Naive thymus-derived CD4-positive, alpha-beta T cell (primary cell): ENCODE measurements at regions of chr15 and their contacts with region 1.

Region 1: DNA sequence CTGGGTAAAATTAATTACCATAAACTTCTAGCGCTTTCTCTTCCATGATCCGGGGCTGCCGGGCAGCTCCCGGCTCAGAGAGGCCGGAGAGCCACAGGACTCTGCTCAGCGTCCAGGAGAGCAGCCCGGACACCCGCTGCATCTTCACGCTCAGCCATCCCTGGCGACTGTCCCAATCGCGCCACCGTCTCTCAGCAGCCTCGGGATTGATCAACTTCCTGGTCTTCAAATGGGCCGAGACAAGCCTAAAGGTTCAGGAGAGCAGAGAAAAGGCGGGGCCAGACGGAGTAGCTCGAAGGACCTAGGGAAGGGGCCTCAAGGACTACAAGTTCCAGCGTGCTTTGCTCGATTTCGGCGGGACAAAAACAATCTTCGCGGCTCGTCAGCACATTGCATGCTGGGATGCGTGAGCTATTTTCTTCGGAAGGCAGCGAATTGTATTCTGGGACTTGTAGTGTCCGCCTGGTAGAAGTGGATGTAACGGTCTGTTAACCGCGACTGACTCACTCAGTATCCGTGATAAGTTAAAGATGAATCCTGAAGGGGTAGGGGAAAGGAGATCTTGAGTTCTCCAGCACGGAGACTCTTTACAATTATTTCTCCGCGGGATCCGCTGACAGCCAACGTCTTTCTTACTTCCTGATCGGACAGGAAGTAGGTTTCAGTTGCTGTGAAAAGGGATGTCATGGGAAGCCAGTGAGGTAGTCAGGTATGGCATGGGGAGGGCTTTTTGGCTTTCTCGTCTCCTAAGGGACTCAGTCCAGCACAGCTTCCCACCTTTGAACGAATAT is at the start of gene CIAO2A:
- DNase-seq: peak; percentile 66 to 93 (median 87)
- ATAC-seq: peak; percentile 80
- H3K4me3 ChIP-seq: peak within 1 kb of the TSS; percentile 87
- H3K4me3 Mint-ChIP-seq: peak within 1 kb of the TSS; percentile 92 to 100 (median 98)
- H3K27ac ChIP-seq: peak within 1 kb of the TSS; percentile 88
- H3K27ac Mint-ChIP-seq: peak within 1 kb of the TSS; percentile 98 to 100 (median 99)
- H3K4me1 ChIP-seq: peaks cover 41 to 48% of the 10 kb centered on the region in 2 donors
- H3K4me1 Mint-ChIP-seq: peaks cover 50 to 86% (median 81%) of the 10 kb centered on the region in 7 donors
- H3K27me3 ChIP-seq: no peaks in the 10 kb centered on the region
- H3K27me3 Mint-ChIP-seq: no peaks in the 10 kb centered on the region
- total RNA-seq, gene CIAO2A: 19.2 to 66.8 (median 28.0) TPM

Region 2: DNA sequence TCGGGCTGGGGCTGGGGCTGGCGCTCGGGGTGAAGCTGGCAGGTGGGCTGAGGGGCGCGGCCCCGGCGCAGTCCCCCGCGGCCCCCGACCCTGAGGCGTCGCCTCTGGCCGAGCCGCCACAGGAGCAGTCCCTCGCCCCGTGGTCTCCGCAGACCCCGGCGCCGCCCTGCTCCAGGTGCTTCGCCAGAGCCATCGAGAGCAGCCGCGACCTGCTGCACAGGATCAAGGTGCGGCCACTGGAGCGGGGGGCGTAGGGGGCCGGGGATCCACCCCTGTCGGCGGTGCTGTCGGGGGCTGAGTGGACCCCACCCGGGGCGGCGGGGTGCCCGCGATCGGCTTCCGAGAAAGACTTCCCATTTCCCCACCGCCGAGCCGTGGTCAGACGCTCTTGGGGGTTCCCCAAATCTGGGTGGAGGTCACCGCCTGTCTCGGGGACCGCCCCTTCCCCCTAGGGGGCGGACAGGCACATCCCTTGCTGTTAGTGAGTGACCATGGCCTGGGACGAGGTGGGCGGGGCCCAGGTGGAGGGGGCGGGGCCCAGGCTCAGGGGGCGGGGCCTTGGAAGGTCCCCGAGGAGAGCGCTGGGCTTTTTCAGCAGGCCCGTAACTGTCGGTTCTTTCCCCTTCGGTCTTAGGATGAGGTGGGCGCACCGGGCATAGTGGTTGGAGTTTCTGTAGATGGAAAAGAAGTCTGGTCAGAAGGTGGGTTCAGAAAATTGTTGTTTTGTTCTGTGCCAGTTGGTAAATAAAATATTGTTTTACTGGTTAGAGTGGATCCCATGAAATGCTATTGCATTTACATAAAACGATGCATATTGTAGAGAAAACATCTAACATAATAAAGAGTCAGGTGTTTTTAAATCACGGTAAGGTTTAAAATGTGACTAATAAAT is 971.6 kb before region 1 on chr15:
- CTCF ChIA-PET with region 1: no interaction called
- POLR2A ChIA-PET with region 1: no interaction called
- intact Hi-C with region 1: loop called (anchors 5 kb)
- DNase-seq: peak; percentile 38 to 91 (median 57)
- ATAC-seq: peak; percentile 95
- H3K4me3 ChIP-seq: peak overlapping the region; percentile 75
- H3K4me3 Mint-ChIP-seq: peak overlapping the region; percentile 80 to 95 (median 92)
- H3K27ac ChIP-seq: peak overlapping the region; percentile 80
- H3K27ac Mint-ChIP-seq: peak overlapping the region; percentile 54 to 95 (median 79)
- H3K4me1 ChIP-seq: peaks cover 4 to 8% of the 10 kb centered on the region in 2 donors
- H3K4me1 Mint-ChIP-seq: peaks cover 9 to 29% (median 18%) of the 10 kb centered on the region in 7 donors
- H3K27me3 ChIP-seq: no peaks in the 10 kb centered on the region
- H3K27me3 Mint-ChIP-seq: no peaks in the 10 kb centered on the region

Region 3: GRCh38 chr15:63504247-63504978 is 589.4 kb before region 1 on chr15 and contains the start of gene USP3:
- CTCF ChIA-PET with region 1: no interaction called
- POLR2A ChIA-PET with region 1: interaction called, 5 read pairs
- intact Hi-C with region 1: loop called (anchors 1 kb)
- DNase-seq: peak; percentile 88 to 95 (median 94)
- ATAC-seq: peak; percentile 86
- H3K4me3 ChIP-seq: peak within 1 kb of the TSS; percentile 95
- H3K4me3 Mint-ChIP-seq: peak within 1 kb of the TSS; percentile 93 to 99 (median 98)
- H3K27ac ChIP-seq: peak within 1 kb of the TSS; percentile 97
- H3K27ac Mint-ChIP-seq: peak within 1 kb of the TSS; percentile 94 to 99 (median 97)
- H3K4me1 ChIP-seq: peaks cover 65 to 70% of the 10 kb centered on the region in 2 donors
- H3K4me1 Mint-ChIP-seq: peaks cover 30 to 75% (median 72%) of the 10 kb centered on the region in 7 donors
- H3K27me3 ChIP-seq: no peaks in the 10 kb centered on the region
- H3K27me3 Mint-ChIP-seq: no peaks in the 10 kb centered on the region
- total RNA-seq, gene USP3: 64.2 to 288 (median 155) TPM

Region 4: DNA sequence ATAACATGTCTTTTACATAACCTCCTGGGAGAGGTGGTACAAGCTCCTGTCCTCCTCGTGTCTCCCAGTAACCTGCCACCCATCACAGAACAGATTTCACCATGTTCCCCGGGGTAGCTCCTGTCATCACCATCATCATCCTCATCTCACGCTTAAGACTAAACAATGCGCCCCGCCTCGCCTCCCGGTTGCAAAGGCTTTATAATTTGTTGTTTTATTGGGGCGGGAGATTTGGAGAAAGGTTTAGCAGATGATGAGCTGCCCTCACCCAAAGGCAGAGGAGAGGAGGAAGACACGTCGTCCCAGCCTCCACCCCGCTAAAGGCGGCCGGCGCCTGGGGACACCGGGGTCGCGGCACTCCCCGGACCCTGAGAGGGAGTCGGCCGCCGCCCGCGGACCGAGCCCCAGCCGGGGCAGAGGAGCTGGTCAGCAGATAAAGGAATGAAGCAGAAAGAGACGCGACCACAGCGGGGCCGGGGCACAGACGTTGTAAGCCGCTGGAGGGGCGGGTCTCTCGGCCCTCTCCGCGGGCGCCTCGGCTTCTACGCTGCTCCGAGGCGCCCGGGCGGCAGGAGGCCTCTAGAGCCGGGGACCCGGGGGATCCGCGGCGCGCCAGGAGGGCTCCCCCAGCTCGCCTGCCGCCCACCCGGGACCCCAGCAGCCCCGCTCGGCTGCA is 260.7 kb before region 1 on chr15:
- CTCF ChIA-PET with region 1: no interaction called
- POLR2A ChIA-PET with region 1: interaction called, 3 read pairs
- intact Hi-C with region 1: loop called (anchors 1 to 2 kb)
- DNase-seq: peak; percentile 11 to 55 (median 38)
- ATAC-seq: peak; percentile 48
- H3K4me3 ChIP-seq: peak overlapping the region; percentile 68
- H3K4me3 Mint-ChIP-seq: peak overlapping the region; percentile 86 to 98 (median 94)
- H3K27ac ChIP-seq: peak overlapping the region; percentile 99
- H3K27ac Mint-ChIP-seq: peak overlapping the region; percentile 94 to 99 (median 97)
- H3K4me1 ChIP-seq: peaks cover 30 to 31% of the 10 kb centered on the region in 2 donors
- H3K4me1 Mint-ChIP-seq: peaks cover 46 to 66% (median 56%) of the 10 kb centered on the region in 7 donors
- H3K27me3 ChIP-seq: no peaks in the 10 kb centered on the region
- H3K27me3 Mint-ChIP-seq: peaks cover 0 to 9% (median 0%) of the 10 kb centered on the region in 5 donors

Region 5: DNA sequence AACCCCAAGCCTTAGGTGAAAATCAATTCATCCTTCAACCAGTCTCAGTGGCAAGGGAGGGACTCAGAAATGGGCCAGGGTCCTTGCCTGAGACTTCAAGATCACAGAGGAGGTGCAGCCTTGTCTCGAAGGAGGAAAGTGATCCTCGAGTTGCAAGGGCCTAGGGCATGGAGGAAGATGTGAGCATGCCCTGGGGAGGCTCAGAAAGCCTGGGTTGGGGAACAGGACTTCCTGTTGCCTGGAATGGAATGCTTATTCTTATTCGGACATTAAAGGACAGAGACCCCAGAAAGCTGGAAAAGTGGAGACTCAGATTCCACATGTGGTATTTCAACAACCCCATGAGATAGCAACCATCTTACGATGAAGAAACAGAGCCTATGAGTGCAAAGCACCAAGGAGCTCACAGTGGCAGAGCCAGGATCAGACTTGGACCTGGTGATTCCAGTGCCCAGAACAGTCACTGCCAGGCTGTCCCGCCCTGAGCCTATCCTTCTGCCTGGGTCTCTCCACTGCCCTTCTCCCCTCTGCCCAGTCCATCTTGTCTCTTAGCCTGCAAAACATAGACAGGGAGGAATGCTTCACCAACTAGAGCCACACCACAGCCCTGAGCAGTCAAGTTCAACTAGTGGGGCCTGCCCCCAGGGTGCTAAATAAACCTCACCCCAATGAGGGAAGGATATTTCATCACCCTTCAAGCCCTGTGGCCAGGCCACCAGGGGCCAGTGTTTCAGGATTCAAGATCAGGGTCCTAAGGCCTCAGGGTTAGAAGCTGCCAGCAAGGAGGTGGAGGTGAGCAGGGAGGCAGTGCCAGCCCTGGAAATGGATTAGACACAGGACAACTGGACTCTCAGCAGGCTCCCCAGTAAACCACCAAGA is 69.4 kb before region 1 on chr15:
- CTCF ChIA-PET with region 1: no interaction called
- POLR2A ChIA-PET with region 1: no interaction called
- intact Hi-C with region 1: no loop called
- DNase-seq: no peak
- ATAC-seq: no peak
- H3K4me3 ChIP-seq: no peak overlapping the region
- H3K4me3 Mint-ChIP-seq: no peak overlapping the region
- H3K27ac ChIP-seq: no peak overlapping the region
- H3K27ac Mint-ChIP-seq: peak overlapping the region in 1 of 9 donors; percentile 38
- H3K4me1 ChIP-seq: peaks cover 0 to 4% of the 10 kb centered on the region in 2 donors
- H3K4me1 Mint-ChIP-seq: peaks cover 0 to 10% (median 0%) of the 10 kb centered on the region in 7 donors
- H3K27me3 ChIP-seq: no peaks in the 10 kb centered on the region
- H3K27me3 Mint-ChIP-seq: no peaks in the 10 kb centered on the region

Region 6: DNA sequence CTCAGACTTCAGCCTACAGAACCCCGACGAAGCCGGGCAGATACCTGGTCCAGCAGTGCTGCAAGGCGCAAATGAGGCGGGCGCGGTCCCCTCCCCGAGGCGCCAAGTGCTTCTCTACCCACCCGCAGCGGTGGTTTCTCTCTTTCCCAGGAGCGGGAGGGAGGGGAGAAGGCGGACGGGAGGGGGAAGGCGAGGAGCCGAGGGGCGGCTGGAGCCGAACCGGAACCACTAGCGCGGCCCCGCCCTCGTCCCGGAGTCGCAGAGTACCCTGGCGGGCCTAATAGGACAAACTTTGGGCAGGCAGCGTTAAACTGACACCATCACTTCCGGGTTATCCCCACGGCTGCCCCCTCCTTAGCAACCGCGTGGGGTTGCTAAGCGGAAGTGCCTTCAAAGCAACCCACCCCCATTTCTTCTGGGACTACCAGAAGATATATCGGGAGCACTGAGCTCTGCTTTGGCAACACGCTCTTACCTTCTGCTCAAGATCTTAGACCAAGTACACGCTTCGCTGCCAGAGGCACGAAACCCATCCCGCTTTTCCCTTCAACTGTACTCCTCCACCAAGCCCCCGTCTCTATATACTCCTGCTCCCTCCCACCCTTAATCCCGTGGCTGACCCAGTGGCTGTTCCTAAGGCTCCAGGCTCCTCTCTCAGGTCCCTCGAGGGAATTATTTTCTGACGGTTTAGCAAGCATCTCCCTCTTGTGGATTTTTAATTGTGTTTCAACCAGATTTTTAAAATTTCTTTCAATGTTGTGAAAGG is 262.3 kb after region 1 on chr15 and contains the start of gene CSNK1G1:
- CTCF ChIA-PET with region 1: no interaction called
- POLR2A ChIA-PET with region 1: no interaction called
- intact Hi-C with region 1: loop called (anchors 1 to 2 kb)
- DNase-seq: peak; percentile 73 to 94 (median 89)
- ATAC-seq: peak; percentile 100
- H3K4me3 ChIP-seq: peak within 1 kb of the TSS; percentile 90
- H3K4me3 Mint-ChIP-seq: peak within 1 kb of the TSS; percentile 90 to 97 (median 92)
- H3K27ac ChIP-seq: peak within 1 kb of the TSS; percentile 73
- H3K27ac Mint-ChIP-seq: peak within 1 kb of the TSS; percentile 78 to 93 (median 92)
- H3K4me1 ChIP-seq: peaks cover 9 to 10% of the 10 kb centered on the region in 2 donors
- H3K4me1 Mint-ChIP-seq: peaks cover 14 to 22% (median 18%) of the 10 kb centered on the region in 7 donors
- H3K27me3 ChIP-seq: no peaks in the 10 kb centered on the region
- H3K27me3 Mint-ChIP-seq: no peaks in the 10 kb centered on the region
- total RNA-seq, gene CSNK1G1: 19.7 to 31.4 (median 26.5) TPM

Region 7: DNA sequence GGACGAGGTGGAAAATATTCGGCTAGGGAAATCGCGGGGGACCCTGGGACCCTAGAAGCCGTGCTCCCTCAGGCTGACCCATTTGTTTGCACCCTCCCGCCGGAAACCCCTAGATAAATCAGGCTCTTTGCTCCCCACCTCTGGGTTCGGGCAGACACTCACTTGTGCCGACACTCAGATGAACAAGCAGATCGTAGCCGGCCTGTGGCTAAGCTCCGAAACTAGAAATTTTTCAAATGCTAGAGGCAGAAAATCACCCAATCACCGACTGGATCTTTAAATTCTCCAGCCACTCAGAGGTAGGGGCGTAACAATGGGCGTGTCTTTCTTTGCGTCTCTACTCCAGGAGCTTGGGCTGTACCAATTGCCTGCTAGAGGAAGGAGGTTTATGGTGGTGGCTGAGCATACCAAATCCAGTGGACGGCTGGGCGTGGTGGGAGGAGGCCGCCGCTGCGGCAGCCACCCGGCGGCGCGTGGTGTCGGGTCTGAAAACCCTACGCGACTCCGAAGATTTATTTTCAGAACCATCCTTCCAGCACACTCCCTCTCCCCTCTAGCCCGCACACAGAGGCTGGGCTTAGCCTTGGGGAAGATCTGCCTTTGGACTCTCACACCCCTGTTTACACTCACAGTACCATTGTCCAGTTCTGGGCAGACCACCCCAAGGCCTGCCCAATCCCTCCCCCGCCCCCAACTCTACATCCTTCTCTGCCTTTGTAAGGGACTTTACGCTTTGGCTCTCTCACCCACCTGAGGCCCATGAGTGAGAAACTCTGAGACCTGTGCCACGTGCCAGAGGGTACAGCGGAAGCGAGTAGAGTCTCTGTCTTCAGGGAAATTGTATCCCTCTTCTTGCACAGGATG is 731.8 kb after region 1 on chr15 and contains the start of gene PIF1:
- CTCF ChIA-PET with region 1: no interaction called
- POLR2A ChIA-PET with region 1: no interaction called
- intact Hi-C with region 1: loop called in 1 of 2 experiments (anchors 10 kb)
- DNase-seq: peak; percentile 44 to 92 (median 87)
- ATAC-seq: peak; percentile 99
- H3K4me3 ChIP-seq: peak within 1 kb of the TSS; percentile 71
- H3K4me3 Mint-ChIP-seq: peak within 1 kb of the TSS; percentile 82 to 95 (median 88)
- H3K27ac ChIP-seq: peak within 1 kb of the TSS; percentile 37
- H3K27ac Mint-ChIP-seq: peak within 1 kb of the TSS in 8 of 9 donors; percentile 41 to 91 (median 75)
- H3K4me1 ChIP-seq: peaks cover 21 to 24% of the 10 kb centered on the region in 2 donors
- H3K4me1 Mint-ChIP-seq: peaks cover 25 to 42% (median 35%) of the 10 kb centered on the region in 7 donors
- H3K27me3 ChIP-seq: peaks cover 0 to 4% of the 10 kb centered on the region in 2 donors
- H3K27me3 Mint-ChIP-seq: peaks cover 0 to 19% (median 12%) of the 10 kb centered on the region in 5 donors
- total RNA-seq, gene PIF1: 0.34 to 30.2 (median 1.0) TPM in 3 of 5 experiments, not detected in the others

Region 8: DNA sequence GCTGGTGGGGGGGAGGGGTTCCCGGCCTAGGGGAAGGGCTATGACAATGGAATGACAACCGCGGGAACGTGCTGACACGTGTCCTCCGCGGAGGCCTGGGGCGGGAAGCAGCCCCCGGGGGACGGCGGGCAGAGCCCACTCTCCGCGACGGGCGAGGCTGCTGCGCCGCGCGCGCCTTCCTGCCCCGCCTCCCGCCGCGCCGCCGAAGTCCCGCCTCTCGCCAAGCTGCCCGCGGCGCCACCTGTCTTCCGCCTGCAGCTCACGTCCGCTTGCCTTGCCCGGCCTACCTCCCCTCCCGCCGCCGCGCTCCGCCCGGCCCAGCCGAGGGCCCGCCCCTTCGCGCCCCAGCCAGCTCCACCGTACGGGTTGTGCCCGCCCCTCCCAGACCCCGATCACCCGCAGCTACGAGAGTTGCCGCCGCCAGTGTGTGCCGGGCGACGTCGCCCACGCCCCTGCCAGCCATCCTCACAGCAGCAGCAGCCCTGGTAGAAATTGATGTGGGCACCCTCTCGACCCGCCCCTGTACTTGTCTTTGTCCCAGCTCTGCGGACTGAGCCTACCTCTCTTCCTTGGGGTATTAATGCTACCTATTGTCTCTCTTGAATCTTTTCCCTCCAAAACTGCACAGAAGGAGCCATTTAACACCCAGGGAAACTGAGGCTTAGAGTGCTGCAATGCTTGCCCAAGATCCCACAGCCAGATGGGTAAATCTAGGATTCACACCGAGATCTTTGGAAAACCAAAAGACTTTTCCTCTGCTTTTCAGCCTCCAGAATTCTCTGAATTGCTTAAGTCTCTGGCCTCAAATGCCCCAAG is 1193.1 kb after region 1 on chr15 and contains the start of gene PARP16:
- CTCF ChIA-PET with region 1: no interaction called
- POLR2A ChIA-PET with region 1: no interaction called
- intact Hi-C with region 1: loop called in 1 of 2 experiments (anchors 5 kb)
- DNase-seq: peak; percentile 85 to 95 (median 87)
- ATAC-seq: peak; percentile 97
- H3K4me3 ChIP-seq: peak within 1 kb of the TSS; percentile 68
- H3K4me3 Mint-ChIP-seq: peak within 1 kb of the TSS; percentile 70 to 92 (median 90)
- H3K27ac ChIP-seq: peak within 1 kb of the TSS; percentile 87
- H3K27ac Mint-ChIP-seq: peak within 1 kb of the TSS; percentile 76 to 94 (median 87)
- H3K4me1 ChIP-seq: peaks cover 15 to 18% of the 10 kb centered on the region in 2 donors
- H3K4me1 Mint-ChIP-seq: peaks cover 30 to 60% (median 41%) of the 10 kb centered on the region in 7 donors
- H3K27me3 ChIP-seq: no peaks in the 10 kb centered on the region
- H3K27me3 Mint-ChIP-seq: no peaks in the 10 kb centered on the region
- total RNA-seq, gene PARP16: 10.9 to 21.5 (median 15.7) TPM